Dendritic cell treated with granulocyte-macrophage colony-stimulating factor and Interleukin-4, amounts not matched to agents 40 ng/mL and 50 ng/mL, for 4 days (primary cell): ENCODE measurements at regions of chr7 and their contacts with region 1.

Region 1: DNA sequence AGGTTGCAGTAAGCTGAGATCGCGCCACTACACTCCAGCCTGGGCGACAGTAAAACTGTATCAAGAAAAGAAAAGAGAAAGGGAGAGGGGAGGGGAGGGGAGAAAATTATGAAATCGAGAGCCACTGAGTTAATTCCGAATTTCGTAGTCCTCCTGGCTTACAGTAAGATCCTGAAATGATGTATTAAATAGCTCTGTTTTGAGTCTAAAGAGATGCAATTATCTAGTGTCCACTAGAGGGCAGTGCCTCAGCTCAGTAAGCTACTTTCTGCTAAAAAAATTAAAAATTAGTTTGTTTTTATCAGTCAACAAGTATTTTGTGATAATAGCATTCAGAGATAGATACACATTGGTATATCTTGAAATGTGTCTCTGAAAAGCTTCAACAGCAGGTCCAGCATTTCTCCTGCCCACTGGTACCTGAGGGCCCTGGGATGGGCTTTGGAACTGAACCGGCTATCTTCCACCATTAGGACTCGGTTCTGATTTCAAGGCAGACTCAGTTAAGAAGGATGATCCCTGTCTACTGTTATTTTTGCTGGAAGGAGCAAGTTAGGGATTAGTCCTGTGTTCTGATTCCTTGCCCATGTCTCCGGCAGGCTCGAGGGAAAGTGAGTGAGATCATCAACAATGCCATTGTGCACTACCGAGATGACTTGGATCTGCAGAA is 19.5 kb downstream of the TSPAN33 start:
- H3K4me3 Mint-ChIP-seq: no peak overlapping the region
- H3K27ac Mint-ChIP-seq: no peak overlapping the region
- H3K4me1 Mint-ChIP-seq: peaks cover 17% of the 10 kb centered on the region
- H3K27me3 Mint-ChIP-seq: peaks cover 2% of the 10 kb centered on the region

Region 2: DNA sequence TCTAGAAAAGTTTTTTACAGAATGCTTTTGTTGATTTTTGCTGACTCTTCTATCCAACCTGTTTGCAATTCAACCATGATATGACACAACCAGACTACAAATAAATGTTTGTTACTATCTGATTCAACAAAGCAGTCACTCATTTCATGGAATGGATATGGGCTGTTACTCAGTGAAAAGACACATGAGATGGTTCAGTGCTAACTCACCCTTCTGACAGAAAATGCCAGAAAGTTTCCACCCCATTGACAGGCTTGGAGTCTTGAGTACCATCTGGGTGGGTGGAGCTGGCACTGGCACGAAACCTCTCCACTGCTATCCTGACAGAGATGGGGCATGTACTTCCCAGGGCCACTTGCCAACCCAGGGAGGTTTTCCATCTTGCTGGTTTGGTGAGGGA is 859.8 kb before region 1 on chr7:
- intact Hi-C with region 1: no loop called
- H3K4me3 Mint-ChIP-seq: no peak overlapping the region
- H3K27ac Mint-ChIP-seq: no peak overlapping the region
- H3K4me1 Mint-ChIP-seq: peaks cover 14% of the 10 kb centered on the region
- H3K27me3 Mint-ChIP-seq: no peaks in the 10 kb centered on the region

Region 3: GRCh38 chr7:129101746-129102145 is 62.3 kb before region 1 on chr7:
- intact Hi-C with region 1: no loop called
- H3K4me3 Mint-ChIP-seq: no peak overlapping the region
- H3K27ac Mint-ChIP-seq: no peak overlapping the region
- H3K4me1 Mint-ChIP-seq: peaks cover 23% of the 10 kb centered on the region
- H3K27me3 Mint-ChIP-seq: no peaks in the 10 kb centered on the region

Region 4: DNA sequence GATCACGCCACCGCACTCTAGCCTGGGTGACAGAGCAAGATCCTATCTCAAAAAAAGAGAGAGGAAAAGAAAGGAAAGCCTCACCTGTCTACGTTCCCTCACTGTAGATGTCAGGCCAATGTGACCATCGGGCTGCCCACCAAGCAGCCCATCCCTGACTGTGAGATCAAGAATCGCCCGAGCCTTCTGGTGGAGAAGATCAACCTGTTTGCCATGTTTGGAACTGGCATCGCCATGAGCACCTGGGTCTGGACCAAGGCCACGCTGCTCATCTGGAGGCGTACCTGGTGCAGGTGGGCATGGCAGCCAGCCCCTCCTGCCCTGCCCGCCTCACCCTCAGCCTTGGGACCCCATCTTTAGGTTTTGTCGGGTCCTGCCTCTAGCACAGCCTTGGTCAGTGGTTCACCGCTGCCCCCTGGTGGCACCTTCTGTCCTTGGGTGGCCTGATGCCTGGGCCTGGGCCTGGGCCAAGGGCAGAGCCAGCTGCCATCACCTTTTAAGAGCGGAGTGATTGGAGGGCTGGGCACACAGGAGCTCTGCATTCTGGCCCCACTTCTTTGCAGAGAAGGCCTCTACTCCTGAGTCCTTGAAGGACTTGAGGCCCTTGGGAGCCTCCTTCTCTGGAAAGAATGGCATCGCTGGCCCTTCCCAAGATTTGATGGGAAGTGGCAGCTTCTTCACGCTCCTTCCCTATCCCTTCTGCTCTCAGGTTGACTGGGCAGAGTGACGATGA is 46.4 kb after region 1 on chr7:
- intact Hi-C with region 1: loop called (anchors 1 kb)
- H3K4me3 Mint-ChIP-seq: no peak overlapping the region
- H3K27ac Mint-ChIP-seq: no peak overlapping the region
- H3K4me1 Mint-ChIP-seq: peaks cover 18% of the 10 kb centered on the region
- H3K27me3 Mint-ChIP-seq: peaks cover 7% of the 10 kb centered on the region